CD8-positive, alpha-beta T cell (primary cell): ENCODE measurements at regions of chr12 and their contacts with region 1.

Region 1: DNA sequence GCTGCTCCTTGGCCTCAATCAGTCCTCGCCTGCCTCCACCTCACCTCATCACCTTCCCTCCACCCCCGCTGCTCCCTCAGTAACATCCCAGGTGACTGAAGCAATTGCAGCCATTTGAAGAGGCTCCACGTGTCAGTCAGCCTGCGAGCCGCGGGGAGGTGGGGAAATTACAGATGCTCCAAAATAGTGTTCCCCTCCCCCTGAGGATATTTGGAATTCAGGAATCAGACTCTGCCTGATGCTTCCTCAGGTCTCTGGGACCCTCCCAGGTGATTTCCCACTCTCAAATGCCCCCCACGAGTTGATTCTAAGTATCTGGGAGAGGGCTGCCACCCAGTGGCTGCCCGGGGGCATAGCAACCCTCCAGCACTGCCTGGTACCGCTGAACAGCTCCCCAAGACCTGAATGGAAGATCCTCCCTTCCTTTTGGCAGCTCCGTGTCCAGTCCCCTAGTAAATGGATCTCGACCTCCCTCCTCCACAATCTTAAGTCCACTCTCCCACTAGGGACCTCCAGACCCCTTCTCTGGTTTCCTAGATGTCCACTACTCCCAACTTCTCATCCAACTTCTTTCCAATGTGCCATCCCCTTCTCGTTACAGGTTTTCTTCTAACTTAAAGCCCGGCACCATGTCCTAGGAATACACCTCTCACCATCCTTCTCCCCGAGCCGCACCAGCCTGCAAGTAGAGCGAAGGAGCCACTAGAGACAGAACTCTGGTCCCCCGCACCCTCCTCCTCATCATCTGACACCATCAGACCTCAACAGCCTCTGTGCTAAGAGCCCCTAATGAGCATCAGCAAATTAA is 1.4 kb upstream of the ASIC1 start:
- DNase-seq: peak; percentile 24 to 76 (median 61)
- ATAC-seq: peak; percentile 56
- H3K4me3 ChIP-seq: no peak overlapping the region
- H3K4me3 Mint-ChIP-seq: peak overlapping the region; percentile 90
- H3K27ac ChIP-seq: no peak overlapping the region
- H3K27ac Mint-ChIP-seq: no peak overlapping the region
- H3K4me1 ChIP-seq: peaks cover 50% of the 10 kb centered on the region
- H3K4me1 Mint-ChIP-seq: peaks cover 42% of the 10 kb centered on the region
- H3K27me3 ChIP-seq: peaks cover 9 to 25% of the 10 kb centered on the region in 2 experiments
- H3K27me3 Mint-ChIP-seq: peaks cover 34% of the 10 kb centered on the region
- CTCF ChIP-seq: peak; percentile 95

Region 2: GRCh38 chr12:48795480-48796455 is 1260.3 kb before region 1 on chr12:
- CTCF ChIA-PET with region 1: no interaction called
- POLR2A ChIA-PET with region 1: no interaction called
- intact Hi-C with region 1: no loop called
- DNase-seq: peak in 8 of 9 experiments; percentile 34 to 74 (median 60)
- ATAC-seq: peak; percentile 90
- H3K4me3 ChIP-seq: no peak overlapping the region
- H3K4me3 Mint-ChIP-seq: no peak overlapping the region
- H3K27ac ChIP-seq: no peak overlapping the region
- H3K27ac Mint-ChIP-seq: no peak overlapping the region
- H3K4me1 ChIP-seq: no peaks in the 10 kb centered on the region
- H3K4me1 Mint-ChIP-seq: peaks cover 3% of the 10 kb centered on the region
- H3K27me3 ChIP-seq: peaks cover 0 to 4% of the 10 kb centered on the region in 2 experiments
- H3K27me3 Mint-ChIP-seq: peaks cover 15% of the 10 kb centered on the region
- CTCF ChIP-seq: peak; percentile 92

Region 3: DNA sequence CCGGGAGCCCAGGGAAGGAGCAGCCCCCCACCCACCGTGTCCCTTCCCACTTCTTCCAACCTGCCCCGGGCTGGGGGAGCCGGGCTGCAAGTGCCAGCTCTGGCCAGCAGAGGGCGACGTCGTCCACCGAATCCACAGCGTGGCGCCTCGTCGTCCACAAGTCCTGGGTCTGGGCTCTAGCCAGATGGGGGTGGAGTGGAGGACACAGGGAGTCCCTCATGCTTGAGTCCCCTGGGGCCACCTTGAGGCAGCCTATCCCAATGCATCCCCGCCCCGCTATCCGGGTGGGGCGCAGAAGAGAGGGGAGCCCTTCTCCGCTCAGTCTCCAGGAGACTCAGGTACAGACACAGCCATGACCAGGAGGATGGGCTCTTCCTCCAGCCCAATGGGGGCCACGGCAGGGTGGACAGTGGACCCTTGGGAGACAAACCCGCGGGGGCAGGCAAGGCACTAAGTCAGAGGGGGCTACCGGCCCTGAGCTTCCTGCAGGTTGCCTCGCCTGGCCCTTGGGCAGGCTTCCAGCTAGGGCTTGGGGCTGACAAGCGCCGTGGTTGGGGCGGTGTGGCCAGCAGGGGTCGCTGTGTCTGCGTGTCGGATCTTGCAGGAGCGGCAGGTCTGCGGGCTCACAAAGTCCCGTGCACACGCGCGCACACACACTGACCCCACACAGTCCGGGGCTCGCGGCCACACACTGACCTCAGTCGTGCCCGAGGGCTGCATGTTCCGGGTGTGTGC is 88.8 kb before region 1 on chr12:
- CTCF ChIA-PET with region 1: interaction called, 39 read pairs
- POLR2A ChIA-PET with region 1: no interaction called
- intact Hi-C with region 1: loop called in 1 of 2 experiments (anchors 1 kb)
- DNase-seq: peak; percentile 87 to 98 (median 91)
- ATAC-seq: peak; percentile 88
- H3K4me3 ChIP-seq: peak overlapping the region; percentile 52 to 59
- H3K4me3 Mint-ChIP-seq: peak overlapping the region; percentile 74
- H3K27ac ChIP-seq: no peak overlapping the region
- H3K27ac Mint-ChIP-seq: no peak overlapping the region
- H3K4me1 ChIP-seq: peaks cover 9% of the 10 kb centered on the region
- H3K4me1 Mint-ChIP-seq: peaks cover 6% of the 10 kb centered on the region
- H3K27me3 ChIP-seq: peaks cover 4 to 14% of the 10 kb centered on the region in 2 experiments
- H3K27me3 Mint-ChIP-seq: peaks cover 41% of the 10 kb centered on the region
- CTCF ChIP-seq: peak; percentile 98

Region 4: GRCh38 chr12:50032639-50033581 is 23.1 kb before region 1 on chr12:
- CTCF ChIA-PET with region 1: interaction called, 191 read pairs
- POLR2A ChIA-PET with region 1: interaction called, 5 read pairs
- intact Hi-C with region 1: no loop called
- DNase-seq: no peak
- ATAC-seq: no peak
- H3K4me3 ChIP-seq: no peak overlapping the region
- H3K4me3 Mint-ChIP-seq: no peak overlapping the region
- H3K27ac ChIP-seq: no peak overlapping the region
- H3K27ac Mint-ChIP-seq: no peak overlapping the region
- H3K4me1 ChIP-seq: no peaks in the 10 kb centered on the region
- H3K4me1 Mint-ChIP-seq: no peaks in the 10 kb centered on the region
- H3K27me3 ChIP-seq: peaks cover 0 to 5% of the 10 kb centered on the region in 2 experiments
- H3K27me3 Mint-ChIP-seq: peaks cover 23% of the 10 kb centered on the region
- CTCF ChIP-seq: no peak

Region 5: DNA sequence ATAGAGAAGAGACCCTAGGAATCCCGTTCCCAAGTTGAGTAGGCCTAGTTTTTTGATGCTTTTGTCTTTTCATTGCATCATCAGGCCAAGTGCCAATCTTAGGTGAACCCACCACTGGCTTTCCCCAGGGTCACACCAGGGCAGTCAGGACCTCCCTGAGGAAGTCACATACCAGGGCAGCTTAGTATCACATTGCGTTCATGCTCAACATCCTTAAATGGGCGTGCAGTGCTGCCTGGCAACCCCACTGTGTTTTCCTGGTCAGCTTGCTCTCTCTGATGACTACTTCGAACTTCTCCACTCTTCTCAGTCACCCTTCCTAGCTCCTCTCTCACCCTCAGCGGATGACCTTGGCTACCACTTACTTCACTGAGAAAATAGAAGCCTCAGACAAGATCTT is 10.4 kb after region 1 on chr12:
- CTCF ChIA-PET with region 1: interaction called, 43 read pairs
- POLR2A ChIA-PET with region 1: interaction called, 3 read pairs
- intact Hi-C with region 1: loop called in 1 of 2 experiments (anchors 2 kb)
- DNase-seq: no peak
- ATAC-seq: no peak
- H3K4me3 ChIP-seq: no peak overlapping the region
- H3K4me3 Mint-ChIP-seq: no peak overlapping the region
- H3K27ac ChIP-seq: no peak overlapping the region
- H3K27ac Mint-ChIP-seq: no peak overlapping the region
- H3K4me1 ChIP-seq: no peaks in the 10 kb centered on the region
- H3K4me1 Mint-ChIP-seq: peaks cover 10% of the 10 kb centered on the region
- H3K27me3 ChIP-seq: no peaks in the 10 kb centered on the region
- H3K27me3 Mint-ChIP-seq: no peaks in the 10 kb centered on the region
- CTCF ChIP-seq: no peak